Right cardiac atrium (tissue), 5 donors: ENCODE measurements at regions of chr7 and their contacts with region 1.

Region 1: GRCh38 chr7:30893357-30893756 is 18.3 kb upstream of the AQP1 start:
- DNase-seq: peak; percentile 60 to 89 (median 87)
- ATAC-seq: peak; percentile 78 to 82
- H3K4me3 ChIP-seq: no peak overlapping the region
- H3K27ac ChIP-seq: peak overlapping the region; percentile 79
- H3K4me1 ChIP-seq: peaks cover 40% of the 10 kb centered on the region
- H3K27me3 ChIP-seq: no peaks in the 10 kb centered on the region

Region 2: GRCh38 chr7:30814700-30815387 is 78.5 kb before region 1 on chr7:
- intact Hi-C with region 1: loop called in 1 of 4 experiments (anchors 10 kb)
- DNase-seq: peak; percentile 62 to 77 (median 76)
- ATAC-seq: peak; percentile 72
- H3K4me3 ChIP-seq: no peak overlapping the region
- H3K27ac ChIP-seq: peak overlapping the region; percentile 63
- H3K4me1 ChIP-seq: peaks cover 16% of the 10 kb centered on the region
- H3K27me3 ChIP-seq: no peaks in the 10 kb centered on the region